Activated CD4-positive, alpha-beta T cell treated with anti-CD3 and anti-CD28 coated beads for 36 hours (primary cell): ENCODE measurements at regions of chr4 and their contacts with region 1.

Region 1: GRCh38 chr4:78517050-78517652 is 34.4 kb upstream of the ANXA3 start:
- DNase-seq: no peak
- ATAC-seq: no peak
- H3K4me3 Mint-ChIP-seq: no peak overlapping the region
- H3K27ac Mint-ChIP-seq: no peak overlapping the region
- H3K4me1 Mint-ChIP-seq: no peaks in the 10 kb centered on the region
- H3K27me3 Mint-ChIP-seq: peaks cover 2% of the 10 kb centered on the region

Region 2: GRCh38 chr4:77994194-77994721 is 522.9 kb before region 1 on chr4:
- CTCF ChIA-PET with region 1: interaction called, 3 read pairs
- POLR2A ChIA-PET with region 1: no interaction called
- intact Hi-C with region 1: loop called in 1 of 2 experiments (anchors 10 kb)
- DNase-seq: peak; percentile 14
- ATAC-seq: peak; percentile 47
- H3K4me3 Mint-ChIP-seq: no peak overlapping the region
- H3K27ac Mint-ChIP-seq: no peak overlapping the region
- H3K4me1 Mint-ChIP-seq: no peaks in the 10 kb centered on the region
- H3K27me3 Mint-ChIP-seq: peaks cover 15% of the 10 kb centered on the region

Region 3: GRCh38 chr4:78056265-78057129 is 460.7 kb before region 1 on chr4:
- CTCF ChIA-PET with region 1: no interaction called
- POLR2A ChIA-PET with region 1: no interaction called
- intact Hi-C with region 1: loop called (anchors 2 to 10 kb)
- DNase-seq: peak; percentile 61
- ATAC-seq: peak; percentile 76
- H3K4me3 Mint-ChIP-seq: peak overlapping the region; percentile 72
- H3K27ac Mint-ChIP-seq: no peak overlapping the region
- H3K4me1 Mint-ChIP-seq: peaks cover 24% of the 10 kb centered on the region
- H3K27me3 Mint-ChIP-seq: peaks cover 53% of the 10 kb centered on the region